Activated naive CD4-positive, alpha-beta T cell treated with anti-CD3 and anti-CD28 coated beads for 36 hours (primary cell): ENCODE measurements at regions of chr4 and their contacts with region 1.

Region 1: DNA sequence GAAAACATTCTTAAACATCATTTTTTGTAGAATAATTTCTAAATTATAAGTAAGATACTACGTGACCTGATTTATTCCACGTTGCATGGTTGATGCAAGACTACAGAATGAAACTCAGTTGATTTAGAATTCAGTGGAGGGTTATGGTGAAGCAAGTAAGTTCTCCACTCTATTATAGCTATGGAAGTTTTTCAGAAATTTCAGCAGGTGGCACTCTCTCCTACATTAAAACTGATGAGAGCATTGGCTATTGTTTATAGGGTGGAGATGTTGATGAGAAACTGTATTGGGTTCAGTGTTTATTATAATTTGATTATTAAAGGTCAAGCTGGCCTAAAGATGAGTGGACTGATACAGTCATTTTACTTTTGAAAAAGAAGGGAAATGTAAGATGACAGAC is 88.0 kb downstream of the FNIP2 start:
- DNase-seq: no peak
- H3K4me3 Mint-ChIP-seq: no peak overlapping the region
- H3K27ac Mint-ChIP-seq: no peak overlapping the region
- H3K4me1 Mint-ChIP-seq: no peaks in the 10 kb centered on the region
- H3K27me3 Mint-ChIP-seq: no peaks in the 10 kb centered on the region

Region 2: DNA sequence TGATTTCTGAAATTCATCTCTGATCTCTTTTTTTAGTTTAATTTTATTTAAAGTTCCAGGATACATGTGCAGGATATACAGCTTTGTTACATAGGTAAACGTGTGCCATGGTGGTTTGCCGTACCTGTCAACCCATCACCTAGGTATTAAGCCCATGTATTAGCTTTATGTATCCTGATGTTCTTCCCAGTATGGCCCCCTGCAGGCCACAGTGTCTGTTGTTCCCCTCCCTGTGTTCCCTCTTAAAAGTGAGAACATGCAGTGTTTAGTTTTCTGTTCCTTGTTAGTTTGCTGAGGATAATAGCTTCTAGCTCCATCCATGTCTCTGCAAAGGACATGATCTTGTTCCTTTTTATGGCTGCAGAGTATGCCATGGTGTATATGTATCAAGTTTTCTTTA is 399.2 kb after region 1 on chr4:
- CTCF ChIA-PET with region 1: no interaction called
- intact Hi-C with region 1: loop called (anchors 5 kb)
- DNase-seq: no peak
- H3K4me3 Mint-ChIP-seq: no peak overlapping the region
- H3K27ac Mint-ChIP-seq: no peak overlapping the region
- H3K4me1 Mint-ChIP-seq: peaks cover 2% of the 10 kb centered on the region
- H3K27me3 Mint-ChIP-seq: no peaks in the 10 kb centered on the region

Region 3: DNA sequence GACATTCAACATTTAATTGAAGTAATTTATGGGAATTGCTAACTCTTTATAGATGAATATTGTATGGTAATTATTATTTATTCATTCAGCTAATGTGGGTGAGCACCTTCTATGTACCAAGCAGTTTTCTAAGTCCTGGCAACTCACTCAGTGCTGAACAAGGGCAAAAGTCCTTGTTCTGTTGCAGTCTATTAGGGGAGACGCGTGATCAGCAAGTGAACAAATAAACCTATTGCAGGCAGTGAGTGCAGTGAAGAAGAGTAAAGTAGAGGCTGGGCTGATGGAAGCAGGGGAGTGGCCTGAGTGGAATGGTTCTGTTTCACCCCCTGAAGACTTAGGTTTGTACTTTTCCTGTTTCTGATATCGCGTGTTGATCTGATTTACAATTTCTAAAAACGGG is 460.4 kb after region 1 on chr4:
- CTCF ChIA-PET with region 1: no interaction called
- intact Hi-C with region 1: loop called (anchors 5 kb)
- DNase-seq: no peak
- H3K4me3 Mint-ChIP-seq: no peak overlapping the region
- H3K27ac Mint-ChIP-seq: no peak overlapping the region
- H3K4me1 Mint-ChIP-seq: no peaks in the 10 kb centered on the region
- H3K27me3 Mint-ChIP-seq: no peaks in the 10 kb centered on the region

Region 4: DNA sequence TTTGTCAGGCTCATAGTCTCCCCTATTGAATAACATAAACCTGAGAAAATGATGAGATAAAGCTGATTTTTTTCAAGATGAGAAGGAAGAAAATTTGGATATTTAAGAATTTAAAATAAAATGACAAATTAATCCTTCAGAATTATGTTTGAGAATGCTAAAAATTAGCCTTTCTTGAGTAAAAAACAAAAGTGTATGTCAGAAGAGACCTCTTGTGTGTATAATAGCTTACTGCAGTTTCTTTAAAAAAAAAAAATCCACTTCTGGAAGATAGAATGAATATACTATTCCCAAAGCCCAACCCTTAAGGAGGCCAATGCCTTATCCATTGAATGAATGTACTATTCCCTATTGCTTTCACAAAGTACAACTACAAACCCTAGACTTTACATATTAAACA is 527.8 kb after region 1 on chr4:
- CTCF ChIA-PET with region 1: no interaction called
- intact Hi-C with region 1: loop called (anchors 2 kb)
- DNase-seq: no peak
- H3K4me3 Mint-ChIP-seq: no peak overlapping the region
- H3K27ac Mint-ChIP-seq: no peak overlapping the region
- H3K4me1 Mint-ChIP-seq: no peaks in the 10 kb centered on the region
- H3K27me3 Mint-ChIP-seq: peaks cover 28% of the 10 kb centered on the region